ENCODE measurements at regions of chr11 and their contacts with region 1.

Region 1: DNA sequence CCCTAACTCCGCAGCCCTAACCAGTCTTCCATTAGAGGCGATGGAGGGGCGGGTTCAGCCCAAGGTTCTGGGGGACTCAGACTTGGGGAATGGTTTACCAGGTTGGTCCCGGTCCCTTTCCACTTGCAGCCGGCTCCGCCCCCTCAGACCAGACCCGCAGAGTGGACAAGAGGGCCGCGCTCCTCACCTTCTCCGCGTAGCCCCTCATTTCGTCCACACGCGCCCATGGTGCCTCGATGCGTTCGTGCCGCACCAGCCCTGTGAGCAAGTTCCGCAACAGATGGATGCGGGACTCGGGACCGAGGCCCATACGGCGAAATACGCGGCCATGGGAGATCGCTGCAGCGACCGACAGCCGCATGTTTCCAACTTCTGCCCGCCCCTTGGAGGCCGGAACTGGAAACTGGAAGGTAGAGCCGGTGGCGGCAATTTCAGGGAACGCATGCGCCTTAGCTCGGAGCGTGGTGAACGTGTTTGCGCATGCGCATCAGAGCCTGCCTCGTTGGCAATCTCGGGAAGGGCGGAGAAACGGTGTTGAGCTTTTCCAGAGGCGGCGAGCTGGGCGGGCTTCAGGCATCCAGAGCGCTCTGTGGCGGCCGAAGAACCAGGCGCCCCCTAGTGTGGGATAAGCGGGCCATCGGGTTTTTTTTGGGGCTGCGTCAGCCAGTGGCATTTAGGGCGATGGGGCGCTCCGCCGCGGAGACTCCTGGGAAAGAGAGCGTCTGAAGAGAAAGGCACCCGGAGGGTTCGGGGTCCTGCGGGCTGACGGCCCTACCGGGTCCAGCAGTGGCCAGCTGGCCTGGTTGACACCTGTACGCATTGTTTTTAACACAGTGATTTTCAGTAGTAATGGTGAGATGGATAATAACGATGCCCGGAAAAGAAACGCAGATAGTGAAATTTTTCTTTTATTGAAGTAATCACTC is at the start of gene MRPL17:
- DNase-seq: peak; percentile 100
- ATAC-seq: peak; percentile 98
- H3K4me3 Mint-ChIP-seq: peak within 1 kb of the TSS; percentile 99
- H3K27ac Mint-ChIP-seq: peak within 1 kb of the TSS; percentile 97
- H3K4me1 Mint-ChIP-seq: peaks cover 28% of the 10 kb centered on the region
- H3K27me3 Mint-ChIP-seq: no peaks in the 10 kb centered on the region
- total RNA-seq, gene MRPL17: 60.6 to 69.2 TPM

Region 2: GRCh38 chr11:6531267-6531752 is 151.9 kb before region 1 on chr11:
- CTCF ChIA-PET with region 1: interaction called, 46 read pairs
- POLR2A ChIA-PET with region 1: no interaction called
- DNase-seq: peak; percentile 41
- ATAC-seq: peak; percentile 69
- H3K4me3 Mint-ChIP-seq: no peak overlapping the region
- H3K27ac Mint-ChIP-seq: no peak overlapping the region
- H3K4me1 Mint-ChIP-seq: peaks cover 14% of the 10 kb centered on the region
- H3K27me3 Mint-ChIP-seq: no peaks in the 10 kb centered on the region

Region 3: DNA sequence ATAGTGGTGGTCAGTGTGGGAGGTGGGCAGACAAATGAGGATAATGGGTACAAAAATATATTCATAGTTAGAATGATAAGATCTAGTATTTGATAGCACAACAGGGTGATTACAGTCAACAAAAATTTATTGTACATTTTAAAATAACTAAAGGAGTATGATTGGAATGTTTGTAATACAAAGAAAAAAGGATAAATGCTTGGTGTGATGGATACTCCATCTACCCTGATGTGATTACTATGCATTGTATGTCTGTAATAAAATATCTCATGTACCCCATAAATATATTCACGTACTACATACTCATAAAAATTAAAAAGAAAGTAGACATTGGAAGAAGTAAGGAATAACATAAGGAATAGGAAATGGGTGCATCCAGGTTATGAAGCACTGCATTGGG is 95.2 kb before region 1 on chr11:
- CTCF ChIA-PET with region 1: no interaction called
- POLR2A ChIA-PET with region 1: no interaction called
- DNase-seq: no peak
- ATAC-seq: no peak
- H3K4me3 Mint-ChIP-seq: no peak overlapping the region
- H3K27ac Mint-ChIP-seq: no peak overlapping the region
- H3K4me1 Mint-ChIP-seq: no peaks in the 10 kb centered on the region
- H3K27me3 Mint-ChIP-seq: no peaks in the 10 kb centered on the region

Region 4: GRCh38 chr11:6612213-6613041 is 70.8 kb before region 1 on chr11 and contains the start of gene TAF10:
- CTCF ChIA-PET with region 1: interaction called, 93 read pairs
- POLR2A ChIA-PET with region 1: interaction called, 27 read pairs
- DNase-seq: peak; percentile 98
- ATAC-seq: peak; percentile 95
- H3K4me3 Mint-ChIP-seq: peak within 1 kb of the TSS; percentile 89
- H3K27ac Mint-ChIP-seq: peak within 1 kb of the TSS; percentile 92
- H3K4me1 Mint-ChIP-seq: peaks cover 42% of the 10 kb centered on the region
- H3K27me3 Mint-ChIP-seq: no peaks in the 10 kb centered on the region
- total RNA-seq, gene TAF10: 140 to 156 TPM

Region 5: GRCh38 chr11:6627762-6628241 is 55.4 kb before region 1 on chr11:
- CTCF ChIA-PET with region 1: interaction called, 93 read pairs
- POLR2A ChIA-PET with region 1: interaction called, 3 read pairs
- DNase-seq: peak; percentile 47
- ATAC-seq: peak; percentile 69
- H3K4me3 Mint-ChIP-seq: peak overlapping the region; percentile 20
- H3K27ac Mint-ChIP-seq: peak overlapping the region; percentile 75
- H3K4me1 Mint-ChIP-seq: peaks cover 30% of the 10 kb centered on the region
- H3K27me3 Mint-ChIP-seq: no peaks in the 10 kb centered on the region

Region 6: DNA sequence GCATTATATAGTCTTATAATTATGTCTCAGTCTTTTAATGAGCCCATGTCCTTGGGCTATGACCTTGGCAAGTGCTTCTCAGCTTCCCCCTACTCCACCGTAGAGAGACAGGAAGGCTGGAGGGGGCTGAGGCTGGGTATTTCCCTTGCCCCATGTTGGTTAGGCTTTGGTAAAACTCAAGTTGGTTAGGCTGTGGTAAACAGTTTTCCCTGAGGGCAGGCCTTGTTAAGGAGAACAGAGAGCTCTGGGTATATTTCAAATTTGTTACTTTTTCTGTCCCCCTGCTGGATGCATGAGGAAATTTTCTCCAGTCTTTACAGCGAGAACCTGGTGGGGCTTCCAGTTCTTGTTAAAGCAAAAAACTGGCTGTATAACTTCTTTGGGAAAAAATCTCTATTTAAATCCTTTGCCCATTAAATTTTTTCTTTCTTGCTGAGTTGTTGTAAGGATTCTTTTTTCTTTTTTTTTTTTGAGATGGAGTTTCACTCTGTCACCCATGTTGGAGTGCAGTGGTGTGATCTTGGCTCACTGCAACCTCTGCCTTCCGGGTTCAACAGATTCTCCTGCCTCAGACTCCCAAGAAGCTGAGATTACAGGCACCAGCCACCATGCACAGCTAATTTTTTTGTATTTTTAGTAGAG is 15.3 kb before region 1 on chr11:
- CTCF ChIA-PET with region 1: interaction called, 61 read pairs
- POLR2A ChIA-PET with region 1: interaction called, 8 read pairs
- DNase-seq: peak; percentile 71
- ATAC-seq: peak; percentile 80
- H3K4me3 Mint-ChIP-seq: no peak overlapping the region
- H3K27ac Mint-ChIP-seq: peak overlapping the region; percentile 68
- H3K4me1 Mint-ChIP-seq: peaks cover 72% of the 10 kb centered on the region
- H3K27me3 Mint-ChIP-seq: peaks cover 3% of the 10 kb centered on the region

Region 7: GRCh38 chr11:6746086-6746618 is 63.0 kb after region 1 on chr11:
- CTCF ChIA-PET with region 1: interaction called, 13 read pairs
- POLR2A ChIA-PET with region 1: interaction called, 3 read pairs
- DNase-seq: peak; percentile 65
- ATAC-seq: peak; percentile 85
- H3K4me3 Mint-ChIP-seq: no peak overlapping the region
- H3K27ac Mint-ChIP-seq: no peak overlapping the region
- H3K4me1 Mint-ChIP-seq: peaks cover 41% of the 10 kb centered on the region
- H3K27me3 Mint-ChIP-seq: no peaks in the 10 kb centered on the region

Region 8: GRCh38 chr11:6812390-6813005 is 129.3 kb after region 1 on chr11:
- CTCF ChIA-PET with region 1: no interaction called
- POLR2A ChIA-PET with region 1: no interaction called
- DNase-seq: peak; percentile 47
- ATAC-seq: peak; percentile 74
- H3K4me3 Mint-ChIP-seq: no peak overlapping the region
- H3K27ac Mint-ChIP-seq: no peak overlapping the region
- H3K4me1 Mint-ChIP-seq: no peaks in the 10 kb centered on the region
- H3K27me3 Mint-ChIP-seq: peaks cover 22% of the 10 kb centered on the region